MCF 10A (cell line): ENCODE measurements at regions of chr2 and their contacts with region 1.

Region 1: DNA sequence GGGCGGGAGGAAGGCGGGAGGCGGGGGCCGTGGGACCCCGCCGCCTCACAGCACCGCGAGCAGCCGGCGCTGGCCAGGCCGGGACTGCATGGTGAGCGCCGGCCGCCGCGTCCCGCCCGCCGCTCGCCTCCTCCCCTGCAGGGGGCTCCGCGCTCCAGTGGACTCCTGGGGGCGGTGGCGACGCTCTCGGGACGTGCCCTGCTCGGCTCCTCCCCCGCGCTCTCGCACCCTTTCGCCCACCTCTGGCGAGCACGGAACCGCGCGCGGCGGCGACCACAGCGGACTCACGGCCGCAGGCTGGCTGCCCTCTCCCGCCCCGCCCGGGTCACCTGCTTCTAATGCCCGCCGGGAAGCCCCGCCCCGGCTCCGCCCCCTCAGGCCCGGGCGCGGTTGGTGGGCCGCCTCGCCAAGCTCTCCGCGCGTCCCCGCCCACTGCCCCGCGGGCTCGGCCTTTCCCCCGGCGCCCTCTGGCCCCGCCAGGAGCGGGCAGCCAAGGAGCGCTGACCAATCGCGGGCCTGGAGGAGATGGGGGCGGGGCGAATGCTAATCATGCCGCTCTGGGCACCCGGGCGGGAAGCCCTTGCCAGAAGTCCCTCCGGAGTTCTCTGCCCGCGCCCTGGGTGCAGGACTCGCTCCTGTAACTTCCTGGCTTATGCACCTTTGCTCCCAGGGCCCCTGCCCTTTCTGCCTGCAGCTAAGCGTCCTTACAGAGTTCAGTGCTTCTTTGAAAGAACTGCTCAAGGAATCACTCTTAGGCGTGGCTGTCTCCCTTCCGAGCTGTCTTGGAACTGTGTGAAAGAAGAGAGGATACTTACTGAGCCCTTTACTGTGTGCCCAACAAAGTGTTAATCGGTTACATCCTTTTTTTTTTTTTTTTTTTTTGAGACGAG is at the start of gene FZD5:
- DNase-seq: peak; percentile 95
- H3K4me3 Mint-ChIP-seq: peak within 1 kb of the TSS; percentile 86
- H3K27ac Mint-ChIP-seq: peak within 1 kb of the TSS; percentile 42
- H3K4me1 Mint-ChIP-seq: peaks cover 8% of the 10 kb centered on the region
- H3K27me3 Mint-ChIP-seq: no peaks in the 10 kb centered on the region
- CTCF ChIP-seq: peak; percentile 68
- total RNA-seq, gene FZD5: 2.6 and 4.3 TPM in 2 replicates

Region 2: DNA sequence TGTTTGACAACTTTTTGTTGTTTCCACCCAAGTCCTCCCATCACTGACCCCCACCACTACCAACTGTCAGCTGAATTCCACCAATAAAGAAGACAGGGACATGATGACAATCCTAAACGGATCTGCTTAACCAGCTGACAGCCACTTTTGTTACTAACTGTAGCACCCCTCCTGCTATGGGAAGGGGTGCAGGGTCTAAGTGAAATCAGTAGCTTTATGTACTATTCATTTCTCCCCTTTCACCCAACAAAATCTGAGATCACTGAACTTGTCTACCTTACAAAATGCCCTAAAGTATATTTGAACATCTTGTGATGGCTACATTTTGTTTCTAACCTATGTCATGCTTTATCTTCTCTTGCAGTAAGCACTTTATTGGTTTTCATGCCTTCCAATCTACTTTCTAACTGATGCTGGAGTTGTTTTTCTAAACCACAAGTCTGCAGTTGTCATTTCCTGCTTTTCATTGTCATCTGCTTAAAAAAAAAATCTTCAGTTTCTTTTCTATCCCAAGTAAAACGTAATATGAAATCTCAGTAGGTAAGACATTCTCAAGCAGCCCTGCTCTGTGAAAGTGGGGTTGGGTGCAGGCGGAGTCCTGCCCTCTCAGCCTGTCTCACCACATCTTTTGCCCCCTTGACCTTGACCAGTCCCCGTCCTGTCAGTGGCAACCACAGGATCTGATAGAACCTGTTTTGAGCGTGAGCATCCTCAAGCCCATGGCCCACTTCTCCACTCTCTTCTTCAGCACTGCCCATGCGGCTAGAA is 910.7 kb before region 1 on chr2:
- CTCF ChIA-PET with region 1: no interaction called
- POLR2A ChIA-PET with region 1: no interaction called
- intact Hi-C with region 1: no loop called
- DNase-seq: no peak
- H3K4me3 Mint-ChIP-seq: no peak overlapping the region
- H3K27ac Mint-ChIP-seq: no peak overlapping the region
- H3K4me1 Mint-ChIP-seq: peaks cover 10% of the 10 kb centered on the region
- H3K27me3 Mint-ChIP-seq: no peaks in the 10 kb centered on the region
- CTCF ChIP-seq: no peak

Region 3: DNA sequence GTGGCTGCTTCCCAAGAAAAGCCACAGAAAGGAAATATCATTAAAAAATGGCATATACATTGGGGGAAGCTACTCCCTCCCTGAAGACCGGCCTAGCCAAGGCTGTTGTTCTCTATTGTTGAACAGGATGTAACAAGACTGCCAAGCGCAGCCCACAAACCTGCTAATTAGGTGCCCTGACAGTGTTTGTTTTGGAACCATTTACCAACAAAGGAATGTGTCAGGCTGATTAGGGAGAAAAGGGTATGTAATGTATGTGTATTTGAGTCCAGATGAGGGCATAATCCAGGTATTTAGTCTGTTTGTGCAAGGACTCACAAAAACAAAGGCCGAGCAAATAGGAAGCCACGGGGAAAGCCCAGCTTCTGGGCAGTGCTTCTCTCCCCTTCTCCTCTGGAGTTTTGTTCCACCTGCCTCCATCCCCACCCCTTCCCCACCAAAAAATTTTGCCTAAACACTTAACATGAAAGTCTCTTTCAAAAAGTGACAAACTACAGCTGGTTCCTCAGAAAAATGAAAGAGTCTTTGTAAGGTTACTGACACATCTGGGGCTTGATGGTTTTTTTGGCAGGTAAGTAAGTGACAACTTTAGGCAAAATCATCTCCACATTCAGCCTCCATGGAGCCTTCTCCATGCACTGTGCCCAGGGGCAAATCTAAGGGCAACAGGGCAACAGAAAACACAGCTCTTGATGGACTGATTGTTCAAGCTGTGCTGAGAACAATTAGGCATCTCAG is 78.1 kb after region 1 on chr2:
- CTCF ChIA-PET with region 1: interaction called, 5 read pairs
- POLR2A ChIA-PET with region 1: no interaction called
- intact Hi-C with region 1: loop called (anchors 10 kb)
- DNase-seq: peak; percentile 93
- H3K4me3 Mint-ChIP-seq: no peak overlapping the region
- H3K27ac Mint-ChIP-seq: peak overlapping the region; percentile 89
- H3K4me1 Mint-ChIP-seq: peaks cover 16% of the 10 kb centered on the region
- H3K27me3 Mint-ChIP-seq: no peaks in the 10 kb centered on the region
- CTCF ChIP-seq: no peak

Region 4: DNA sequence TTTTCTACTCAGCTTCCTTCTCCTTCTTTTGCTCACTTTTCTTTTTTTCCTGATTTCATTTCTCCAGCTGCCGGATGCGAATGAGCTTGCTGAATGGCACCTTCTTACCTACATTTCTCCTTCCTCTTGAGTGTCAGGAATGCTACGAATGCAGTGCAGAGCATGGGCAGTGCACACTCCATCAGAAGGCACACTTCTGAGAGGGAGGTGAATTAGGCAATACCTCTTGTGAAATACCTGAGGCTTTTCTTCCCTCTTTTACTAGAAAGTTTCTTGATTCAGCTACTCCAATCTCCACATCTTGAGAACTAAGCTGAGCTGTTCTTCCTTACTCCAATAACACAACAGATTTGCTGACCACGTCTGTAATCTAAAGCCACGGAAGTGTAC is 204.4 kb after region 1 on chr2:
- CTCF ChIA-PET with region 1: interaction called, 6 read pairs
- POLR2A ChIA-PET with region 1: no interaction called
- intact Hi-C with region 1: loop called (anchors 1 kb)
- DNase-seq: peak; percentile 57
- H3K4me3 Mint-ChIP-seq: no peak overlapping the region
- H3K27ac Mint-ChIP-seq: no peak overlapping the region
- H3K4me1 Mint-ChIP-seq: peaks cover 6% of the 10 kb centered on the region
- H3K27me3 Mint-ChIP-seq: no peaks in the 10 kb centered on the region
- CTCF ChIP-seq: no peak

Region 5: DNA sequence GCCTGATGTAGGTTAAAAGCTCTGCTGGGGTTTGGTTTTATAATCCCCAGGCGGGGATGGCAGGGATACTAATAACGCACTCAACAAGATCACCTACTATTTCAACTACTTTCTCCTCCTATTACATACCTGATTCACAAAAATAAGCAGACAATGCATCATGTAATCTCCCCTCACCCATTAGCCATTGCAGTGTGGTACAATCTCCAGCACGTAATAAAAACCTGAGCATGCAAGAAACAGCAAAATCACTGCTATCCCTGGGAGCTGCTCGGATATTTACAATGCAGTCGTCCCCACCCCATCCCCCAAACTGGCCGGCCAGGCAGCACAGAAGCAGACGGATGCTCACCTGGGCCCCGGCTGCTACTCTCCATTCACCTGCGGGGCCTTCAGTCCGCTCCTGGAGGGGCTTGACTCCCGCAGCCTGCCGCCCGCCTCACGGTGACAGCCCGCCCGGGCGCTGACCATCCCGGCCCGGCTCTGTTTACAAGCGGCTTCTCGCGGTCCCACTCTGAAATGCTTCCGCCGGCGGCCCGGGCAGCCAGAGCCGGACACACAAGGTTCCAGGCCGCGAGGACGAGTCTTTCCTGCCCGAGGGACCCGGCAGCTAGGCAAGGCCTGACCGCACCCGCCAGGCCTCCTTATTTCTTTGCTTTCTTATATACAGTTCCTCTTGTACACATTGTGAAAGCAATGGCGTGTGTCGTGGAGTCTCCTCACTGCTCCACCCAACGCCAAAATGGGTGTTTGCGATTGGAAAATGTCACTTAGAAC is 255.4 kb after region 1 on chr2 and contains the start of gene PLEKHM3:
- CTCF ChIA-PET with region 1: interaction called, 7 read pairs
- POLR2A ChIA-PET with region 1: interaction called, 17 read pairs
- intact Hi-C with region 1: no loop called
- DNase-seq: peak; percentile 84
- H3K4me3 Mint-ChIP-seq: peak within 1 kb of the TSS; percentile 78
- H3K27ac Mint-ChIP-seq: peak within 1 kb of the TSS; percentile 87
- H3K4me1 Mint-ChIP-seq: no peaks in the 10 kb centered on the region
- H3K27me3 Mint-ChIP-seq: no peaks in the 10 kb centered on the region
- CTCF ChIP-seq: no peak
- total RNA-seq, gene PLEKHM3: 5.4 and 7.5 TPM in 2 replicates

Region 6: DNA sequence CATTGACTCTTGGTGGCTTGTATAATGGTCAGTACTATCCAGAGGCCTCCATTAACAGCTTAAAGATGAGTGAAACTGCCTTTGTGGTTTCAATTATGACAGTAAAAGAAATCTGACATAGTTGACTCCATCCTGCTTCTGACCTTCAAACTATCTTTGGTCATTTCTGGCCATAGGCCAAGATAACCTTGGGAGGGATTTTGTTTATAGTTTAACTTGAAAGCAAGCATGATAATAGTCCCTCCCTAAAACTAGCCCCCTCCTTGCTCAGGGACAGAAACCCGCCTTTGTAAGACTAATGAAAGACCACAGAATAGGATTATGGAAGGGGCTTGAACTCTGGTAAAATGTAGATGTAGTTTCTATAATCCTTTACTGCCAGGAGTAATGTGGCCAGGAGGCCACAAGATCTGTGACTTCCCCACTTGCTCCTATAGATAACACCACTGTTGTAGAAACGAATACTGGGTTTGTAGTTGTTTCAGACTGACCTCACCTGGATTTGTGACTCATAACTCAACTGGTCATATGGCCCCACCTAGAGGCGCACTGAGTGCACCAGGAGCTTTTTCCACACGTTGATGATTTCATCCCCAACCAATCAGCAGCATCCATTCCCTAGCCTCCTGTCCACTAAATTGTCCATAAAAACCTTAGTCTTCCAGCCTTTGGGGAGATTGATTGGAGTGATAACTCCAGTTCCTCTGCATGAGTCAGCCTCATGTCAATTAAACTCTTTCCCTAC is 264.1 kb after region 1 on chr2:
- CTCF ChIA-PET with region 1: interaction called, 4 read pairs
- POLR2A ChIA-PET with region 1: no interaction called
- intact Hi-C with region 1: loop called (anchors 1 kb)
- DNase-seq: peak; percentile 82
- H3K4me3 Mint-ChIP-seq: no peak overlapping the region
- H3K27ac Mint-ChIP-seq: no peak overlapping the region
- H3K4me1 Mint-ChIP-seq: no peaks in the 10 kb centered on the region
- H3K27me3 Mint-ChIP-seq: no peaks in the 10 kb centered on the region
- CTCF ChIP-seq: peak; percentile 24

Region 7: GRCh38 chr2:208072250-208072892 is 302.5 kb after region 1 on chr2:
- CTCF ChIA-PET with region 1: interaction called, 5 read pairs
- POLR2A ChIA-PET with region 1: no interaction called
- intact Hi-C with region 1: loop called (anchors 1 kb)
- DNase-seq: peak; percentile 75
- H3K4me3 Mint-ChIP-seq: no peak overlapping the region
- H3K27ac Mint-ChIP-seq: no peak overlapping the region
- H3K4me1 Mint-ChIP-seq: no peaks in the 10 kb centered on the region
- H3K27me3 Mint-ChIP-seq: no peaks in the 10 kb centered on the region
- CTCF ChIP-seq: peak; percentile 68